Activated naive CD4-positive, alpha-beta T cell treated with anti-CD3 and anti-CD28 coated beads for 36 hours (primary cell): ENCODE measurements at regions of chr1 and their contacts with region 1.

Region 1: GRCh38 chr1:36223993-36224536 is at the start of gene THRAP3:
- DNase-seq: peak; percentile 100
- H3K4me3 Mint-ChIP-seq: peak within 1 kb of the TSS; percentile 90
- H3K27ac Mint-ChIP-seq: peak within 1 kb of the TSS; percentile 98
- H3K4me1 Mint-ChIP-seq: peaks cover 38% of the 10 kb centered on the region
- H3K27me3 Mint-ChIP-seq: no peaks in the 10 kb centered on the region
- total RNA-seq, gene THRAP3: 128 to 133 TPM

Region 2: DNA sequence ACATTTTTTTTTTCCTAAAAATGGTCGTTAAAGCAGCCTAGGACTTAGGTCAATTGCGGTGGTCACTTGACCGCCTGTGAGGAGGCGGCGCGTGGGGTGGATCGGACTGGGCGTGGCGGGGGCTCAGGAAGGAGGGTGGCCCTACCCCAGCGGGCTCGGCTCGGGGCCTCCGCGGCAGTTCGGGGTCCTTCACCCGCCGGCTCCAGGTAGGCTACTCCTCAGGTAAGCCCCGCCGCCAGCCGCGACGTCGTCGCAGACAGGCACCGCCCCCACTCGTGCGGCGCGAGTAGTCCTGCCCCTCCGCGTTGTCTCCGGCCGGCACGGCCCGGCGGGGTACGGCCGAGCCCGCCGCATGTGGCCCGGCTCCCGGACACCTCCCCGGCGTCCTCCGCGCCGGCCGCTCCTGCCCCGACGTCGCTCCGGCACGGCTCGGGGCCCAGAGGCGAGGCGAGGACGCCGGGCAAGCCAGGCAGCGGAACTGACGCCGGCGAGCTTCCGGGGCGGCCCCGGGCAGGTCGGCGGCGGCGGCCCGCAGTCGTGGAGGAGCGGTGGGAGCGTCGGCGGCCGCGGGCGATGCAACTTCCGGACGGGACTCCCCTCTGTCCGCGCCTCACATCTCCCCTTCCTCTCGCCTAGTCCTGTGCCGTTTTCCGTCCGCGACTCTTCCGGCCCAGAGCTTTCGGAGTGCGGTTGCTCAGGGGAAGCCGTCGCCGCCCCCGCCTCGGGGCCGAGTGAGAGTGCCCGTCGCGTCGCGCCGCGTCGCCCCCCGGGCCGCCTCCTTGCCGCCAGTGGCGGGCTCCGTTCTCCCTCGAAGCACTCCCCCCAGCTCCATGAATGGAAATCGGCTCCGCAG is 293.2 kb before region 1 on chr1 and contains the start of gene AGO3:
- CTCF ChIA-PET with region 1: no interaction called
- intact Hi-C with region 1: loop called (anchors 2 kb)
- DNase-seq: peak; percentile 92
- H3K4me3 Mint-ChIP-seq: peak within 1 kb of the TSS; percentile 94
- H3K27ac Mint-ChIP-seq: peak within 1 kb of the TSS; percentile 90
- H3K4me1 Mint-ChIP-seq: peaks cover 35% of the 10 kb centered on the region
- H3K27me3 Mint-ChIP-seq: no peaks in the 10 kb centered on the region
- total RNA-seq, gene AGO3: 25.1 to 28.2 TPM

Region 3: DNA sequence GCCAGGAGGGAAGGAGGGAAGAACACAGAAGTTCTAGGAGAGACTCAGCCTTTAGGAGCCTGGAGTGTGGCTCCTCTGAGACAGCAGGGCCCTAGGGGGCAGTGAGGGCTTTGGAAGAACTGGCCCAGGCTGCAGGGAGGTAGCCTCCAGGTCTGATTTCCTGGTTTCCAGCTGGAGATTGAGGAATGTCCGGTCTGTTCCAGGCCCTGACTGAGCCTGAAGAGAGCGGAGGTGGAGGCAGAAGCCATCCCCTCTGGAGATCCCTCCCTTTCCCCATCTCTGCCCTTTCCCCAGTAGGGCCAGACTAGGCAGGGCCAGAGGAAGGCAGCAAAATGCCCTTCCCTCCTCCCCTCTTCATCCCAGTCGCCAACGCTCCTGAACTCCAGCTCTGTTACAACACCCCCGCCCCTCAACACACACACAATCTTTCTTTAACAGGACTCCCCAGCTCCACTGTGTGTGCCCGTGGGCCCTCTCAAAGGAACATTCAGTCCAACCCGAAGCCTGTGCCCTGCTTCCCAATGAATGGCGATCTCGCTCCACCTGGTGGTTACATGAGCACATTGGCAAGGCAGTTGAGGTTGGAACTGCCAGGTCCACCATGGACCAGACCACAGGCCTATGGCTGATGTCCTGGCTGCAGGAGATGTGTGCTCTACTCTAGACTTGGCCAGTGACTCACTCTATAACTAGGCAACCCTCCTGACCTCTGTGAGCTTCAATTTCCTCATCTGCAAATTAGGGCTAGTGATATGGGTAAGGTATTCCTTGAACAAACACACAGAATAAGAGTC is 36.1 kb before region 1 on chr1:
- CTCF ChIA-PET with region 1: interaction called, 10 read pairs
- intact Hi-C with region 1: no loop called
- DNase-seq: peak; percentile 92
- H3K4me3 Mint-ChIP-seq: no peak overlapping the region
- H3K27ac Mint-ChIP-seq: peak overlapping the region; percentile 41
- H3K4me1 Mint-ChIP-seq: peaks cover 4% of the 10 kb centered on the region
- H3K27me3 Mint-ChIP-seq: no peaks in the 10 kb centered on the region

Region 4: DNA sequence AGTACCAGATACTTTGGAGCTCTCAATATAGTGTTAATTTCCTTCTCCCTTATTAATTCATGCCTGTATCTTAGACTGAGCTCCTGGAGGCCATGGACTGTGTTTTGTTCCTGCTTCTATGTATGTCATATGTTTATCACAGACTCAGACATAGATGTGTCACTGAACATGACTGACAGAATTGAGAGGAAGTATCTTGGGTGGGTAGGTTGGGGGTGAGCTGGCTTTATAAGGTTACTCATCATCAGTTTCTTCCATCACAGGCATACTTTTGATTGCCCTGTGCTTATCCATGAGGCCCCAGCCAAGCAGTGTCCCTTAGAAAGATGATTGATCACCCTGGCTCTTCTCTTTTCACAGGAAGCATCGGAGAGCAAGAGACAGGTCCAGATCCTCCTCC is 76.5 kb after region 1 on chr1:
- CTCF ChIA-PET with region 1: no interaction called
- intact Hi-C with region 1: loop called (anchors 1 kb)
- DNase-seq: peak; percentile 39
- H3K4me3 Mint-ChIP-seq: no peak overlapping the region
- H3K27ac Mint-ChIP-seq: peak overlapping the region; percentile 77
- H3K4me1 Mint-ChIP-seq: peaks cover 64% of the 10 kb centered on the region
- H3K27me3 Mint-ChIP-seq: no peaks in the 10 kb centered on the region

Region 5: GRCh38 chr1:36463803-36464604 is 239.9 kb after region 1 on chr1 and contains the start of gene MRPS15:
- CTCF ChIA-PET with region 1: no interaction called
- intact Hi-C with region 1: loop called (anchors 1 kb)
- DNase-seq: peak; percentile 98
- H3K4me3 Mint-ChIP-seq: peak within 1 kb of the TSS; percentile 99
- H3K27ac Mint-ChIP-seq: peak within 1 kb of the TSS; percentile 97
- H3K4me1 Mint-ChIP-seq: peaks cover 28% of the 10 kb centered on the region
- H3K27me3 Mint-ChIP-seq: no peaks in the 10 kb centered on the region
- total RNA-seq, gene MRPS15: 122 to 141 TPM